ENCODE measurements at regions of chr2 and their contacts with region 1.

Region 1: DNA sequence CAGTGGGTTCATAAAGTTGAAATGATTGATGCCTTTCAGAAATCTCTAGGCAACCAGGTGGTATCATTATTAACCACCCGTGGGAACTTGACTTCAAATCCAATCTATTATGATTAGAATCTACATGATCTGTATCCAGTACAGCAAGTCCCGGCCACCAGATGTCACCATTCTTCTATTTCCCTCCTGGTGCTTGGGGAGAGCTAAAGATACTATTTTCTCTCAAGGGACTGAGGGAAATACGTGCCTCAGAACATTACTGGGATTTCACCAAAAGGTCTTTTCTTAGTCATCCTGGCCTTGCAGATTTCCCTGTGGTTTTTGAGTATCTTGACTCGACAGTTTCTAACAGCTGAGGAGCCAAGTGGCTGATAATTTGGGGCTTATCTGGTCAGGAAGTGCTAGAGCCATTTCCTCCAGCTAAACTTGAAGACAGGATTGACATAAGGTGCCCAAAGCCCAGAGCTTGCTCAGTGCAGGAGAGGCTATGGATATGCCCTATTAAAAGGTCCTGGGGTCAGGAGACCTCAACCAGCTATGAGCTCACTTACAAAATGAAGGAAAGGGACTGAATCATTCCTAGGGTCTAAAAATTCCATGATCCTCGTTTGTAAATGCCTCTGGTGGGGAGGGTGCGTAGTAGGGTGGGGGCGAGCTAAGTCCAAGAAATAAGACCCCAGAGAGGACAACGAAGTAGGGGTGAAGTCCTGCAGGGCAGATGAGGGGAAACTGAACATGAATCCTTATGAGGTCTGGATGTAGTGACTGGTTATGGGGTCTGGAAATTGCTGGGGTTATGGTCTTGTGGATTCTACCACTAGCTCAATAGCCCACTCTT is 135.4 kb upstream of the MGAT5 start:
- DNase-seq: peak; percentile 98
- ATAC-seq: peak; percentile 48
- H3K4me3 ChIP-seq: no peak overlapping the region
- H3K27ac ChIP-seq: peak overlapping the region; percentile 77; the same call in 1 of the 2 replicates
- H3K4me1 ChIP-seq: peaks cover 18% of the 10 kb centered on the region
- H3K27me3 ChIP-seq: no peaks in the 10 kb centered on the region
- CTCF ChIP-seq: peak; percentile 95
- POLR2A ChIP-seq: no peak
- RAD21 ChIP-seq: peak; percentile 98

Region 2: GRCh38 chr2:133892352-133892913 is 226.1 kb before region 1 on chr2:
- CTCF ChIA-PET with region 1: interaction called, 7 read pairs
- POLR2A ChIA-PET with region 1: no interaction called
- dilution Hi-C with region 1: no loop called
- in situ Hi-C with region 1: loop called (anchors 10 kb)
- intact Hi-C with region 1: no loop called
- DNase-seq: no peak
- ATAC-seq: no peak
- H3K4me3 ChIP-seq: no peak overlapping the region
- H3K27ac ChIP-seq: no peak overlapping the region
- H3K4me1 ChIP-seq: peaks cover 10% of the 10 kb centered on the region
- H3K27me3 ChIP-seq: peaks cover 3% of the 10 kb centered on the region
- CTCF ChIP-seq: no peak
- POLR2A ChIP-seq: no peak
- RAD21 ChIP-seq: no peak

Region 3: GRCh38 chr2:134181210-134181609 is 62.7 kb after region 1 on chr2:
- CTCF ChIA-PET with region 1: no interaction called
- POLR2A ChIA-PET with region 1: no interaction called
- dilution Hi-C with region 1: no loop called
- in situ Hi-C with region 1: no loop called
- intact Hi-C with region 1: no loop called
- DNase-seq: no peak
- ATAC-seq: no peak
- H3K4me3 ChIP-seq: no peak overlapping the region
- H3K27ac ChIP-seq: no peak overlapping the region
- H3K4me1 ChIP-seq: peaks cover 11% of the 10 kb centered on the region
- H3K27me3 ChIP-seq: no peaks in the 10 kb centered on the region
- CTCF ChIP-seq: no peak
- POLR2A ChIP-seq: no peak
- RAD21 ChIP-seq: no peak

Region 4: DNA sequence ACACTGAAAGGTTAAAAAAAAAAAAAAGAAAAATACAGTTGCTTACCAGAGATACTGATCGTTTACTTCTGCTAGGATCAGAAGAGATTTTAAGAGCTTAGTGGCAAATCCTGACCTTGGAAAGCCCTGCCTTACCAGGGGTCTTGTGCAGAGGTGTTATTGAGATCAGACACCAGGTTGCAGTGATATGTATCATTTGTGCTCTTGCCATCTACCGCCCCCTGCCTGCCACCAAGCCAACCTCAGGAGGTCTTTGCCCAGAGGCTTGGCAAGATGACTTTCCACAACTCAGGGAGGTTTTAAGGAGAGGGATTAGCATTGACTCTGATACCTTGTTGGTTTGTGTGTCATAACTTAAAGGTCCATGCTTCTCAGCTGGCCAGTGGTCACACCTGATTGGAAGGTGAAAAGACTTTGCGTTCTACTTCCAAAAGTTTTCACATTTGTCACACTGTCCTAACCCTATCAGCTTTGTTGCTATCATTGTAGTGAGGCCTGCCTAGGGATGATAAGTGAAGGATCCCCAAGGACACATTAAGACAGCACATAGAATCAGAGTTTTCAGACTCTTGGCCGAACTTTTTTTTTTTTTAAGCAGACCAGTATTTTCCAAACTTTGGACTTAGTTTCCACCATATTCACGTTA is 89.2 kb after region 1 on chr2:
- CTCF ChIA-PET with region 1: interaction called, 6 read pairs
- POLR2A ChIA-PET with region 1: no interaction called
- dilution Hi-C with region 1: no loop called
- in situ Hi-C with region 1: no loop called
- intact Hi-C with region 1: loop called (anchors 5 kb)
- DNase-seq: peak; percentile 42
- ATAC-seq: peak; percentile 39; the same call in 1 of the 2 replicates
- H3K4me3 ChIP-seq: no peak overlapping the region
- H3K27ac ChIP-seq: no peak overlapping the region
- H3K4me1 ChIP-seq: peaks cover 16% of the 10 kb centered on the region
- H3K27me3 ChIP-seq: no peaks in the 10 kb centered on the region
- CTCF ChIP-seq: peak; percentile 57
- POLR2A ChIP-seq: no peak
- RAD21 ChIP-seq: peak; percentile 57

Region 5: GRCh38 chr2:134411828-134412638 is 293.5 kb after region 1 on chr2:
- CTCF ChIA-PET with region 1: interaction called, 30 read pairs
- POLR2A ChIA-PET with region 1: no interaction called
- dilution Hi-C with region 1: no loop called
- in situ Hi-C with region 1: loop called (anchors 5 kb)
- intact Hi-C with region 1: loop called (anchors 1 kb)
- DNase-seq: peak; percentile 86
- ATAC-seq: peak; percentile 63
- H3K4me3 ChIP-seq: no peak overlapping the region
- H3K27ac ChIP-seq: peak overlapping the region; percentile 24
- H3K4me1 ChIP-seq: peaks cover 39% of the 10 kb centered on the region
- H3K27me3 ChIP-seq: no peaks in the 10 kb centered on the region
- CTCF ChIP-seq: peak; percentile 87
- POLR2A ChIP-seq: 0 out of 2 replicates have a peak, but pooled peaks have one; percentile 28
- RAD21 ChIP-seq: peak; percentile 92

Region 6: GRCh38 chr2:134727385-134727784 is 608.9 kb after region 1 on chr2:
- CTCF ChIA-PET with region 1: no interaction called
- POLR2A ChIA-PET with region 1: no interaction called
- dilution Hi-C with region 1: no loop called
- in situ Hi-C with region 1: no loop called
- intact Hi-C with region 1: no loop called
- DNase-seq: no peak
- ATAC-seq: no peak
- H3K4me3 ChIP-seq: no peak overlapping the region
- H3K27ac ChIP-seq: no peak overlapping the region
- H3K4me1 ChIP-seq: no peaks in the 10 kb centered on the region
- H3K27me3 ChIP-seq: peaks cover 3% of the 10 kb centered on the region
- CTCF ChIP-seq: no peak
- POLR2A ChIP-seq: no peak
- RAD21 ChIP-seq: no peak

Region 7: GRCh38 chr2:134918526-134919340 is 800.2 kb after region 1 on chr2 and contains the start of gene CCNT2:
- CTCF ChIA-PET with region 1: no interaction called
- POLR2A ChIA-PET with region 1: no interaction called
- dilution Hi-C with region 1: no loop called
- in situ Hi-C with region 1: loop called (anchors 10 kb)
- intact Hi-C with region 1: no loop called
- DNase-seq: peak; percentile 98
- ATAC-seq: peak; percentile 91
- H3K4me3 ChIP-seq: peak within 1 kb of the TSS; percentile 89
- H3K27ac ChIP-seq: peak within 1 kb of the TSS; percentile 98
- H3K4me1 ChIP-seq: peaks cover 2% of the 10 kb centered on the region; the same call in 1 of the 2 replicates
- H3K27me3 ChIP-seq: no peaks in the 10 kb centered on the region
- CTCF ChIP-seq: 0 out of 2 replicates have a peak, but pooled peaks have one; percentile 3
- POLR2A ChIP-seq: peak; percentile 87
- RAD21 ChIP-seq: no peak
- total RNA-seq, gene CCNT2: 30.6 and 44.6 TPM in 2 replicates